ENCODE measurements at regions of chr18 and their contacts with region 1.

Region 1: DNA sequence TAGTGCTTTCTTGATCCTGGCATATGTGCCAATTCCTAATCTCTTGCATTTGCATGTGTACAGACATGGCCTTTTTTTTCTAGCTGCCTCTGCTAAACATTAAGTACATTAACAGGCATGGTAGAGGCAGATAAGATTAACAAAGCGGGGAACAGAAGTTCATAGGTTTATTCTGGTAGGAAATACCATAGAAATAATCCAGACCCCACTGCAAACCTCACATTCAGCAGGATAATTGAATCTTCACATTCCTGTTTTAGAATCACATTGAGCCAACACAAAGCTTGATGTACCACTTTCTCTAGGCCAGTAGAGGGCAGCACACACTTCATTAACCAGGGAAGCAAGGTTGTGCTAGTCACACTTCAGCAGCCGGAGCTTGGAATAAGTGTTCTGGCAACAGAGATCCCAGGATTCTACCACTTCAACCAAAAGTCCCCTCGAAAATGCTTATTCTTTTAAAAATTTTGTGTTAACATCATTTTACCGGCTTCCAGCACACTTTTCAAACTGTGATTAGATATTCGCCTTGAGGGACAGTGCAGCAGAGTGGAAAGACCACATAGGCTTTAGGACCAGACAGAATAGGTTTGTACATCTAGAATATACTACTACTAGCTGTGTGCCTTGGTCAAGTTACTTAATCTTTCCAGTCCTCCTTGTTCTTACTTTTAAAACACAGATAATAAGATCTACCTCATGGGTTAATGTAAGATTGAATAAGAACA is 420.2 kb upstream of the CHST9 start:
- DNase-seq: peak; percentile 65
- ATAC-seq: peak; percentile 98
- H3K4me3 ChIP-seq: no peak overlapping the region
- H3K27ac ChIP-seq: no peak overlapping the region
- H3K4me1 ChIP-seq: no peaks in the 10 kb centered on the region
- H3K27me3 ChIP-seq: no peaks in the 10 kb centered on the region
- CTCF ChIP-seq: peak; percentile 74
- POLR2A ChIP-seq: no peak
- RAD21 ChIP-seq: peak; percentile 70

Region 2: DNA sequence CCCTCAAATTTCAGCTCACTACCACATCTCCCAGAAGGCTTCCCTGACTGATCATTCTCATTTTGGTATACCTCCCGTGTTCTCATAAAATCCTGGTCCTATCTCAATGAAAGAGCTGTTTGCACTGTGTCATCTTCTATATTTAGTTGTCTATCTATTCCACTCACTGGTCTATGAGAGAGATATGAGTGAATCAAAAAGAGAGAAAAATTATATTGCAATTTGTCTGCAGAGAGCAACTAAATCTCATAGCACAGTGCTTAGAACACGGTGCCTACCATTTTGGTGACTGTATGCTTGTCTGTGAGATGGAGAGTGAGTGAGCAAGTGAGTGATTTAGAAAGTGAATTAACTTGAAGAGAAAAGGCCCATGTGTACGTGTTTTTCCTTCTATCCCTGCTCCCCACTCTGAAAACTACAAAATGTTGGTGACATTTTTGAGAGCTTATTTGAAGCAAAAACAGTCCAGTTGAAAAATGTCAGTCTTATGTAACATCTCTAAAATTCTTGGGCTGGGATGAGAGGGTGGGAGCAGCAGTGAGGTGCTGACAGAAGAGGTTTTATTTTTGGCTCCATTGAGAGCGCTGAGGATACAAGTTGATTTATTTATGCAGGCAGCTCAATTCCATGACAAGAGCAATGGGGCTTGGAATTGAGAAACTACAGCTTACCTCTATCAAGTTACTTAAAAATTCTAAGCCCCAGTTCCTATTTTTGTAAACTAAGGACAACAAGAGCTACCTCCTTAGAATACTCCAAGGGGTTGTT is 46.7 kb before region 1 on chr18:
- CTCF ChIA-PET with region 1: no interaction called
- POLR2A ChIA-PET with region 1: no interaction called
- dilution Hi-C with region 1: no loop called
- in situ Hi-C with region 1: no loop called
- intact Hi-C with region 1: no loop called
- DNase-seq: no peak
- ATAC-seq: no peak
- H3K4me3 ChIP-seq: no peak overlapping the region
- H3K27ac ChIP-seq: no peak overlapping the region
- H3K4me1 ChIP-seq: no peaks in the 10 kb centered on the region
- H3K27me3 ChIP-seq: no peaks in the 10 kb centered on the region
- CTCF ChIP-seq: no peak
- POLR2A ChIP-seq: no peak
- RAD21 ChIP-seq: no peak

Region 3: DNA sequence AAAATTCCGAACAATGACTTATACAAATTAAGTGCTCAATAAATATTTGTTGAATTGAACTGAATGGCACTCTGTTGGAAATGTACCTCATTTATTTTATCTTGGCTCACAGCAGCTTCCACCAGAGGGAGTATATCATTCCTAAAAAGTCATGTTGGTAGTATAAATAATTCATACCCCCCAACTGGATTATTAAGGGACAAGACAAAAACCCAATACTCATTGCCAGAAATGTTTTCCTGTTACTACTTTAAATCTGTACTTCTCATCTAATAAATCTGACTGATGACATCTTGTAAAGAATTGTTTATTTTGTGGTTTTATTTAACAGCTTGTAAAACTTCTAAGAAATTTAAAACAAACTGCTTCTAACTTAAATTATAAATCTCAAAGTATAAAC is 407.8 kb after region 1 on chr18:
- CTCF ChIA-PET with region 1: no interaction called
- POLR2A ChIA-PET with region 1: no interaction called
- dilution Hi-C with region 1: no loop called
- in situ Hi-C with region 1: no loop called
- intact Hi-C with region 1: loop called (anchors 10 kb)
- DNase-seq: peak; percentile 23
- ATAC-seq: no peak
- H3K4me3 ChIP-seq: no peak overlapping the region
- H3K27ac ChIP-seq: no peak overlapping the region
- H3K4me1 ChIP-seq: peaks cover 4% of the 10 kb centered on the region; the same call in 1 of the 2 replicates
- H3K27me3 ChIP-seq: no peaks in the 10 kb centered on the region
- CTCF ChIP-seq: peak; percentile 57
- POLR2A ChIP-seq: no peak
- RAD21 ChIP-seq: peak; percentile 60

Region 4: DNA sequence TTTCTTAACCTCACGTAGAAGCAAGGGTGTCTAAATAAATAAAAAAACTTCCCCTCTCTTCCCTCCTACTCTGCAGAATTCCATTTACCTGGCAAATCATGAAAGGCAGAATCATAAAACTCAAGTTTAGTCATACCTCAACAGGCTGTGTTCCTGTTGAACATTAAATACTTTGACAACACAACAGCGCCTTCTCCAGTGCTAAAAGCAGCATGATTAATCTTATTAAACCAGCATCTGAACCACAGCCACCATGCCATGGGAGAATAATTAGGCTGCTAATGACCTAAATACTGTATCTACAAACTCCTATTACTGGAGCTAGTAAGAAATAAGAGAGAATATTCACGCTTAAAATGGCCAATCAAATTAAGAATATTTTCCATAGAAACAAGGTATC is 503.5 kb after region 1 on chr18:
- CTCF ChIA-PET with region 1: no interaction called
- POLR2A ChIA-PET with region 1: no interaction called
- dilution Hi-C with region 1: no loop called
- in situ Hi-C with region 1: no loop called
- intact Hi-C with region 1: loop called (anchors 5 kb)
- DNase-seq: no peak
- ATAC-seq: no peak
- H3K4me3 ChIP-seq: no peak overlapping the region
- H3K27ac ChIP-seq: no peak overlapping the region
- H3K4me1 ChIP-seq: peaks cover 17% of the 10 kb centered on the region
- H3K27me3 ChIP-seq: no peaks in the 10 kb centered on the region
- CTCF ChIP-seq: no peak
- POLR2A ChIP-seq: no peak
- RAD21 ChIP-seq: peak; percentile 37

Region 5: DNA sequence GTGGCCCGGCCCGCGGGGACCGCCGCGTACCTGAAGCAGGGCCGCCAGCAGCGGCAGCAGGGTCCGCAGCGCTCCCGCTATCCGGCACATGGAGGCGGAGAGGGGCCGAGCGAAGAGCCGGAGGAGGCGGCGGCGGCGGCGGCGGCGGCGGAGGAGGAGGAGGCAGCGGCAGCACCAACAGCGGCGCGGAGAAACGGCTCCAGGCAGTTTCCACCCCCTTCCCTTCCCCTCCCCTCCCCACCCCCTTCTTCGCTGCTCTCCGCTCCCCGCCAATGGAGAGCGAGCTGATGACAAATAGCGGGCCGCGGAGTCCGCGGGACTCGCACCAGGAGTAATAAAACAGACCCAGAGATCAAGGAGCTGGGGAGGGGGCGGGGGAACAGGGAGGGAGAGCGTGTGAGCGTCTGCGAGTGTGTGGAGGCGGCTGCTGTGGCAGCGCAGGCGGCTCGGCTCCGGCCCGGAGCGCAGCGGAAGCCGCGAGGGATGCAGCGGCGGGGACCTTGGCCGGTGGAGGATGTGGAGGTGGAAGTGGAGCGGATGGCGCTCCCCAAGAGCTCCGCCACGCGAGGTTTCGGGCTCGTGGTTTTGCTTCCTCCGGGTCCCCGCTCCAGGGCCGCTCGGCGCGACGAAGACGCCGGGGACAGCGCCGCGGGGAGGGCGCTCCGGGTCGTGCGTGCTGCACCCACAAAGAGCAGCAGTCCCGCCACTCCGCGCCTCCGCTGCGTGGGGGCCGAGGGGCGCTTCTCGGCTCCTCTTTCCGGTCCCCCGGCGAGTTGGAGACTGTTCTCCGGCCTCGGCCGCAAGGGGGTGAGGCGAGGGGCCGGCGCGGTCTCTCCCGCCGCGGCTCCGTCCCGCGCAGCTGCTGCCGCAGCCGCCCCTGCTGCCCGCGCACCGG is 571.9 kb after region 1 on chr18 and contains the start of gene CDH2:
- CTCF ChIA-PET with region 1: no interaction called
- POLR2A ChIA-PET with region 1: no interaction called
- dilution Hi-C with region 1: no loop called
- in situ Hi-C with region 1: no loop called
- intact Hi-C with region 1: loop called (anchors 5 kb)
- DNase-seq: peak; percentile 85
- ATAC-seq: peak; percentile 73
- H3K4me3 ChIP-seq: peak within 1 kb of the TSS; percentile 99
- H3K27ac ChIP-seq: peak within 1 kb of the TSS; percentile 18; the same call in 1 of the 2 replicates
- H3K4me1 ChIP-seq: peaks cover 3% of the 10 kb centered on the region; the same call in 1 of the 2 replicates
- H3K27me3 ChIP-seq: no peaks in the 10 kb centered on the region
- CTCF ChIP-seq: peak; percentile 17; the same call in 1 of the 2 replicates
- POLR2A ChIP-seq: peak; percentile 53; the same call in 1 of the 2 replicates
- RAD21 ChIP-seq: no peak
- total RNA-seq, gene CDH2: 105 and 111 TPM in 2 replicates

Region 6: GRCh38 chr18:28189400-28190239 is 584.3 kb after region 1 on chr18:
- CTCF ChIA-PET with region 1: no interaction called
- POLR2A ChIA-PET with region 1: no interaction called
- dilution Hi-C with region 1: no loop called
- in situ Hi-C with region 1: loop called (anchors 10 kb)
- intact Hi-C with region 1: no loop called
- DNase-seq: peak; percentile 87
- ATAC-seq: peak; percentile 94
- H3K4me3 ChIP-seq: no peak overlapping the region
- H3K27ac ChIP-seq: no peak overlapping the region
- H3K4me1 ChIP-seq: no peaks in the 10 kb centered on the region
- H3K27me3 ChIP-seq: no peaks in the 10 kb centered on the region
- CTCF ChIP-seq: peak; percentile 91
- POLR2A ChIP-seq: no peak
- RAD21 ChIP-seq: peak; percentile 92

Region 7: GRCh38 chr18:28637897-28638296 is 1032.6 kb after region 1 on chr18:
- CTCF ChIA-PET with region 1: no interaction called
- POLR2A ChIA-PET with region 1: no interaction called
- dilution Hi-C with region 1: no loop called
- in situ Hi-C with region 1: no loop called
- intact Hi-C with region 1: loop called (anchors 10 kb)
- DNase-seq: no peak
- ATAC-seq: no peak
- H3K4me3 ChIP-seq: no peak overlapping the region
- H3K27ac ChIP-seq: no peak overlapping the region
- H3K4me1 ChIP-seq: no peaks in the 10 kb centered on the region
- H3K27me3 ChIP-seq: no peaks in the 10 kb centered on the region
- CTCF ChIP-seq: no peak
- POLR2A ChIP-seq: no peak
- RAD21 ChIP-seq: no peak

Region 8: GRCh38 chr18:29147944-29148343 is 1542.7 kb after region 1 on chr18:
- CTCF ChIA-PET with region 1: no interaction called
- POLR2A ChIA-PET with region 1: no interaction called
- dilution Hi-C with region 1: no loop called
- in situ Hi-C with region 1: no loop called
- intact Hi-C with region 1: loop called (anchors 10 kb)
- DNase-seq: peak; percentile 85
- ATAC-seq: peak; percentile 97
- H3K4me3 ChIP-seq: no peak overlapping the region
- H3K27ac ChIP-seq: 0 out of 2 replicates have a peak overlapping the region, but pooled peaks have one; percentile 3
- H3K4me1 ChIP-seq: no peaks in the 10 kb centered on the region
- H3K27me3 ChIP-seq: no peaks in the 10 kb centered on the region
- CTCF ChIP-seq: no peak
- POLR2A ChIP-seq: no peak
- RAD21 ChIP-seq: no peak